ENCODE measurements at regions of chr6 and their contacts with region 1.

Region 1: GRCh38 chr6:13614926-13615798 is at the start of gene NOL7:
- DNase-seq: peak; percentile 97 to 100 (median 98)
- ATAC-seq: peak; percentile 90 to 92
- H3K4me3 Mint-ChIP-seq: peak within 1 kb of the TSS; percentile 96 to 98 (median 98)
- H3K27ac Mint-ChIP-seq: peak within 1 kb of the TSS; percentile 92 to 99 (median 97)
- H3K4me1 Mint-ChIP-seq: peaks cover 17 to 51% (median 38%) of the 10 kb centered on the region in 4 donors
- H3K27me3 Mint-ChIP-seq: no peaks in the 10 kb centered on the region
- polyA plus RNA-seq, gene NOL7: 109 to 142 (median 139) TPM

Region 2: DNA sequence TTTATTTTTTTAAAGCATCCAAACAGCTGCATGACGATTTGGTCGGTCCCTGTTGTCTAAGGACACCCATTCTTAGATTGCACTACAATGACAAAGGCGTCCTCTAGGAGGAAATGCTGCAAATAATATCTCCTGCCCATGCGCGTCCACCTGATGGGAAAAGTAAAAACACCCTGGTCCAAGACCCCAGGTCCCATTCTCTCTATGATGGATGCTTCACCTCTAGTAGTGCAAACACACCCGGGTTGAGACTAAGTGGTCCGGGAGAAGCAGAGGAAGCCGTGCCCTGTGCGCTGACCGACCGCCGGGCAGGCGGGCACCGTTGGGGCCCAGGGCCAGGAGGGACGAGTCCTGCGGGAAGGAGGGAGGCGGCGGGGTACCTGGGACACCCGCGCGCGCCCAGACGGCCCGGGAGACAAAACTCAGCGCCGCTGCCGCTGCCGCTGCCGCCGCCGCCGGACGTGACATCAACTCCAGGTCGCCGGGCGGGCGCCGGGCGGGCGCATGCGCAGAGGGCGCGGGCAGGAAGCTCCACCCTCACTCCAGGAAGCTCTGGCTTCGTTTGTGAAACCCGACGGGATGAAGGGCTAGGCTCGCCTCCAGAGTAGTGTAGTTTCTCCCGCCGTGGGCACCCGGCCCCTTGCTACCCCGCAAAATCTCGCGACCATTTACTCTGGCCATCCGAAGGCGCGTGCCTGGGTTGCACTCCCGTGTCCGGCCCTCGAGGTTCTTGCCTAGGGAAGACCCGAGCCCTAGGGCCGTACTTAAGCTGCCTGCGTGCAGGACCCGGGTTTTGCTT is 286.9 kb before region 1 on chr6 and contains the start of gene TBC1D7:
- POLR2A ChIA-PET with region 1: interaction called, 17 read pairs
- DNase-seq: peak; percentile 88 to 96 (median 94)
- ATAC-seq: peak; percentile 86 to 88
- H3K4me3 Mint-ChIP-seq: peak within 1 kb of the TSS; percentile 90 to 97 (median 96)
- H3K27ac Mint-ChIP-seq: peak within 1 kb of the TSS; percentile 95 to 99 (median 98)
- H3K4me1 Mint-ChIP-seq: peaks cover 2 to 31% (median 19%) of the 10 kb centered on the region in 4 donors
- H3K27me3 Mint-ChIP-seq: no peaks in the 10 kb centered on the region
- polyA plus RNA-seq, gene TBC1D7: 11.8 to 17.1 (median 12.5) TPM

Region 3: DNA sequence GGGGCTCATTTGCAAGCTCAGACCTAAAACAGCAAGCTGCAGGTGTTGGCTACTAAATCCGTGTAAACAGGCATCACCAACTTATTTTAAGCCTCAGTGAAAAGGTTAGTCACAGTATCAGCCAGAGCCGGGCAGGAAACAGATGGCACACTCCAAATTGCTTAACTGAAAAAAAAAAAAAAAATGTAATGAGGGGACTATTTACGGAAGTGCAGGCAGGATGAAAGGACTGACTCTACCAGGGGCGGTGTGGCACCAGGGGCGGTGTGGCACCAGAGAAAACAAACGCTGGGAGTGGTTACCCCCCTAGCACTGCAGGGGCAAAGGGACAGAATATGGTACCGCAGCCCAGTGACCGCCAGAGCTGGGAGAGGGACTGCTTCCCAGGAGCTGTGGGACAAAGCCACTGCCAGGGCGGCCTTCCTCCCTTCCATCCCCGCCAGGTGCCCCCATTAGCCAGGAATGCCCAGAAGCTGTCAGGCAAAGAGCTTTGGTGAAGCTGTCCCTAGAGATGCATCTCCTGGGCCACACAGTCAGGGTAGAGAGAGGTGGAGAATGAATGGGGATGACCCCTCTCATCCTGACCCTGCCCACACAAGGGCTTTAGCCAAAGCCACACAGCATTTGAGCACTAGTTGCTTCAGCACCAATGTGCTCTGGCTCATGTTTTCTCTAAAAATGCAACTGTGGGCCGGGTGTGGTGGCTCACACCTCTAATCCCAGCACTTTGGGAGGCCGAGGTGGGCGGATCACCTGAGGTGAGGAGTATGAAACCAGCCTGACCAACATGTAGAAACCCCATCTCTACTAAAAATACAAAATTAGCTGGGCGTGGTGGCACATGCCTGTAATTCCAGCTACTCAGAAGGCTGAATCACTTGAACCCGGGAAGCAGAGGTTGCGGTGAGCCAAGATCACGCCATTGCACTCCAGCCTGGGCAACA is 88.2 kb before region 1 on chr6:
- POLR2A ChIA-PET with region 1: interaction called, 10 read pairs
- DNase-seq: peak; percentile 29 to 85 (median 56)
- ATAC-seq: peak; percentile 97 to 99
- H3K4me3 Mint-ChIP-seq: peak overlapping the region; percentile 3 to 75 (median 56)
- H3K27ac Mint-ChIP-seq: peak overlapping the region; percentile 0 to 94 (median 79)
- H3K4me1 Mint-ChIP-seq: peaks cover 5 to 41% (median 25%) of the 10 kb centered on the region in 4 donors
- H3K27me3 Mint-ChIP-seq: no peaks in the 10 kb centered on the region

Region 4: GRCh38 chr6:13574149-13574570 is 41.0 kb before region 1 on chr6:
- POLR2A ChIA-PET with region 1: interaction called, 91 read pairs
- DNase-seq: peak; percentile 88 to 97 (median 93)
- ATAC-seq: peak; percentile 82 to 85
- H3K4me3 Mint-ChIP-seq: peak overlapping the region; percentile 90 to 99 (median 97)
- H3K27ac Mint-ChIP-seq: peak overlapping the region; percentile 93 to 99 (median 96)
- H3K4me1 Mint-ChIP-seq: peaks cover 15 to 30% (median 26%) of the 10 kb centered on the region in 4 donors
- H3K27me3 Mint-ChIP-seq: no peaks in the 10 kb centered on the region

Region 5: GRCh38 chr6:13687917-13688351 is 72.8 kb after region 1 on chr6:
- POLR2A ChIA-PET with region 1: interaction called, 10 read pairs
- DNase-seq: peak in 4 of 10 donors; percentile 15 to 65 (median 54)
- ATAC-seq: peak; percentile 82 to 90
- H3K4me3 Mint-ChIP-seq: peak overlapping the region; percentile 23 to 83 (median 78)
- H3K27ac Mint-ChIP-seq: peak overlapping the region; percentile 93 to 96 (median 95)
- H3K4me1 Mint-ChIP-seq: peaks cover 42 to 72% (median 67%) of the 10 kb centered on the region in 4 donors
- H3K27me3 Mint-ChIP-seq: no peaks in the 10 kb centered on the region

Region 6: DNA sequence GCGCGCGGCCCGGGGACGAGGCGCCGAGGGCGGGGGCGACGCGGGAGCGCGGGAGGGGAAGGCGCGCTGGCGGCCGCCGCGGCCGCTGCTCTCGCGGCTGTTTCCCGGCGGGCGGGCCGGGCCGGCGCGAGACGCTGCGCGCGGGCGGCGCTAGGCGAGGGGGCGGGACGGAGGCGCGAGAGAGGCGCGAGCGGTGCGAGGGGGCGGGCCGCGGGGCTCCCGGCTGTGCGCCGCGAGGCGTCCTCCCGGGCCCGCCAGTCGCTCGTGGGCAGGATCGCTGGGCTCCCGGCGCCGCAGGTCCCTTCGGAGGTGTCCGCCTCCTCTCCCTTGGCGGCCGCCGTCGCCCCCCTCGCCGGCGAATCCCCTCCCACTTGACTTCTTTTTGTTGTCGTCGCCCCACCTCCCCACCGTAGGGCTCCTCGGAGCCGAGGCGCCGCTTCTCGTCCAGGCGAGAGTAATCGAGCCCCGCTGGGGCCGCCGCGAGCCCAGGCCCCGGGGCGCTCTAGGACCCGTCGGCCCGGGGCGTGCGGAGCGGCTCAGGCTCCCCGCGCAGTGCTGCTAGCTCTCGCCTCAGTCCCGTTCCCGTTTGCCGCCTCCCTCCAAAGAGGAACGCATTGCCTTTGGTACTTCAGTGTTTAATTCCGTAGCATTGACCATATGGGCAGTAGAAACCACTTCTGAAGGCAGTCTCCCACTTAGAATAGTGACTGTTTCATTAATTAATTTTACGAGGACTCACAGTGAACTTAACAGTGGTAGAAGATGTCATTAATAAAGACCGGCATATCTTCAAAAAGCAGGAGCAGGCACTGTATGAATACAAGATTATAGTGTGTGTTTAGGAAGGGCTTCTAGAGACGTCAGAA is 96.8 kb after region 1 on chr6 and contains the start of gene RANBP9:
- POLR2A ChIA-PET with region 1: interaction called, 103 read pairs
- DNase-seq: peak; percentile 86 to 96 (median 90)
- ATAC-seq: peak; percentile 83
- H3K4me3 Mint-ChIP-seq: peak within 1 kb of the TSS; percentile 93 to 99 (median 97)
- H3K27ac Mint-ChIP-seq: peak within 1 kb of the TSS; percentile 95 to 99 (median 98)
- H3K4me1 Mint-ChIP-seq: peaks cover 19 to 53% (median 38%) of the 10 kb centered on the region in 4 donors
- H3K27me3 Mint-ChIP-seq: no peaks in the 10 kb centered on the region
- polyA plus RNA-seq, gene RANBP9: 1.9 to 5.6 (median 3.9) TPM